PC-9 (cell line): ENCODE measurements at regions of chr1 and their contacts with region 1.

Region 1: DNA sequence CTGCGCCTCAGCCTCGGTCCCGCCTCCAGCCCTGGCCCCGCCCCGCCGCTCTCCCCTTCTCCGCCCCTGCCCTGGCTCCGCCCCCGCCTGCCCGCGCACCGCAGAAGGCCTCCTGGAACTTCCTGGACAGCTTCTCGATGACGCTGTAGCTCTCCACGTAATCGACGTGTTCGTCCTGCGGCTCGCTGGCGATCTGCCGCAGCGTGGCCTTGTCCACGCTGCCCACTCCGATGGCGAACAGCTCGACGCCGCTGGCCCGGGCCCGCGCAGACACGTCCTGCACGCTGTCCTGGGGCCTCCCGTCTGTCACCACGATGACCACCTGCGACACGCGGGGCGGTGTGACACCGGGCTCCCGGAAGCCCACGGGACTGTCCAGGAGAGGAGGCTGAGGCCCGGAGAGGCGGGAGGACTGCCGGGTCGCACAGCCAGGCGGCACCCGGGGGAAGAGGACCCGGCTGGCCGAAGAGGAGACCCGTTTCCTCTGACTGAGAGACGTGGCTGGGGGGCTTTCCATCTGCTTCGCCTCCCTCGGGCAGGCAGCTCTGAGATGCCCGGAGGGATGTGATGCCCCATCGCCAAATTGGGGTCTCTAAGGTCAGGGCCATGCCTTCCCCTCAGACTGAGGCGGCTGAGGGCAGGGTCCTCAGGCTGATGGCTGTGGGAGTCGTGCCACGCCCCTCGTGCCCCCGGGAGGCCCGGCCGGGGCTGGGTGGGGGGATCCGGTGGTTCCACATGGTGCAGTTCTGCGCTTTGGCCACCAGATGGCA is 4.6 kb downstream of the MATN1 start:
- DNase-seq: peak; percentile 79 to 96
- H3K4me3 ChIP-seq: peak overlapping the region; percentile 77
- H3K27ac ChIP-seq: peak overlapping the region; percentile 83
- H3K4me1 ChIP-seq: 0 out of 2 replicates have a peak, but pooled peaks cover 5% of the 10 kb centered on the region
- H3K27me3 ChIP-seq: no peaks in the 10 kb centered on the region
- CTCF ChIP-seq: peak; percentile 95

Region 2: GRCh38 chr1:30473922-30474817 is 244.7 kb before region 1 on chr1:
- CTCF ChIA-PET with region 1: no interaction called
- POLR2A ChIA-PET with region 1: no interaction called
- intact Hi-C with region 1: no loop called
- DNase-seq: no peak
- H3K4me3 ChIP-seq: no peak overlapping the region
- H3K27ac ChIP-seq: no peak overlapping the region
- H3K4me1 ChIP-seq: no peaks in the 10 kb centered on the region
- H3K27me3 ChIP-seq: no peaks in the 10 kb centered on the region
- CTCF ChIP-seq: no peak

Region 3: GRCh38 chr1:30743584-30744059 is 24.8 kb after region 1 on chr1:
- CTCF ChIA-PET with region 1: no interaction called
- POLR2A ChIA-PET with region 1: interaction called, 12 read pairs
- intact Hi-C with region 1: no loop called
- DNase-seq: no peak
- H3K4me3 ChIP-seq: no peak overlapping the region
- H3K27ac ChIP-seq: no peak overlapping the region
- H3K4me1 ChIP-seq: peaks cover 20% of the 10 kb centered on the region
- H3K27me3 ChIP-seq: no peaks in the 10 kb centered on the region
- CTCF ChIP-seq: no peak

Region 4: GRCh38 chr1:30756545-30757195 is 37.8 kb after region 1 on chr1:
- CTCF ChIA-PET with region 1: interaction called, 5 read pairs
- POLR2A ChIA-PET with region 1: interaction called, 4 read pairs
- intact Hi-C with region 1: loop called (anchors 2 kb)
- DNase-seq: peak; percentile 84 to 93
- H3K4me3 ChIP-seq: peak overlapping the region; percentile 40; the same call in 1 of the 2 replicates
- H3K27ac ChIP-seq: peak overlapping the region; percentile 75
- H3K4me1 ChIP-seq: peaks cover 65% of the 10 kb centered on the region
- H3K27me3 ChIP-seq: no peaks in the 10 kb centered on the region
- CTCF ChIP-seq: no peak

Region 5: DNA sequence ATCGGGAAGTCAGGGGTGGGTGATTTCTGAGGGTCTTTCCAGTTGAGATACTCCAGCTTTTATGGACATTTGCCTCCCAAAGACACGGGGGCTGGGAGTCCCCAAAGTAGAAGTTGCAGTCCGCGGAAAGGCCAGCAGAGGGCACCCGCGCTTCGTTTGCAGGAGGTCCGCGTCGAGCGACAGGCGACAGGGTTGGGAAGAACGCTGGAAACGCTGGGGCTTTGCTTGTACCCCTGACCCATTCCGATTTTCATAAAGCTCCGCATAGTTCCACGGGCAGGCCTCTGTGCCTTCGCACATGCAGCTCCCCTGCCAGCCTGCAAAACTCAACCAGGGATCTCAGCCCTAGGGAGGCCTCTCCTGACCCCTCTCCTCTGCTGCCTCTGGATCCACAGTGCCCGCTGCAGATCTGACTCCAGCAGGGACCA is 83.0 kb after region 1 on chr1:
- CTCF ChIA-PET with region 1: interaction called, 4 read pairs
- POLR2A ChIA-PET with region 1: no interaction called
- intact Hi-C with region 1: loop called (anchors 5 kb)
- DNase-seq: peak in 1 of 2 experiments; percentile 79
- H3K4me3 ChIP-seq: no peak overlapping the region
- H3K27ac ChIP-seq: no peak overlapping the region
- H3K4me1 ChIP-seq: peaks cover 25% of the 10 kb centered on the region
- H3K27me3 ChIP-seq: peaks cover 6% of the 10 kb centered on the region; the same call in 1 of the 2 replicates
- CTCF ChIP-seq: peak; percentile 88

Region 6: DNA sequence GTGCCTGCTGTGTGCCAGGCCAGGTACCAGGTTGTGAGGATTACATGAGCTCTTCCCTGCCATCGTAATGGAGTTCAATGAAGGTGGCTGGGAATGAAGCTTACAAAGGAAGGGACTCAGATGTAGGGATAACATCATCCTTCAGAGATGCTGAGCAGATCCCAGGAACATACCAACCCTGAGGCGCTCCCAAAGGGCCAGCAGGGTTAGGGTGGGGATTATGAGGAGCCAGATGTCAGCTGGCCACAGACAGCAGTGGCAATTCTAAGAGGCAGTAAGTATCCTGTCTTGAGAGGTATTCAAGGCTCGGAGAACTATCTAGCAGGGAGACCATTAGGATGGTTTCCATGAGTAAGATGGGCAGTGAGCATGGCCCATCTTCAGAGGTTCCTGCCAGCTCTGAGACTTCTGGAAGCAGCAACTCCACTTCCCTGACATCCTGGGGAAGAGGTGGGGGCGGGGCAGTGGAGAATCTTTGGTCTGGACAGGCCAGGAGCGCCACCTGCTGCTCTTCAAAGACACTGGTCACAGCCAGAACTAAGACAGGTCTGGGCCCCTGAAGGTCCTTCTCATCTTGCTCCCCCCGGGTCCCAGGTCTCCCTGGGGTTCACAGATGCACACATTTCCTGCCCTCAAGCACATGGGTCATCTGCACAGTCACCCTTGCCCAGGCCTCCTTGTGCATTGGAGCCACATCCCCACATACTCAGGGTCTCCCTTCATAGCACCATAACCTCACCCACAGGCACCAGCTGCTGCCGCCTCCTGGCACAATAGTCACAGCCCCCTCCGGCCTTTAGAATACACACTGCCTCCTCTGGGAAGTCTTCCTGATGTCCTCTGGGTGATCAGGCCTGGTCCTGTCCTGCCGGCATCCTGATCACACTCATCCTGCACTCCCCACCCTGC is 192.5 kb after region 1 on chr1:
- CTCF ChIA-PET with region 1: interaction called, 10 read pairs
- POLR2A ChIA-PET with region 1: interaction called, 7 read pairs
- intact Hi-C with region 1: loop called (anchors 1 kb)
- DNase-seq: peak; percentile 41 to 74
- H3K4me3 ChIP-seq: no peak overlapping the region
- H3K27ac ChIP-seq: no peak overlapping the region
- H3K4me1 ChIP-seq: peaks cover 17% of the 10 kb centered on the region
- H3K27me3 ChIP-seq: no peaks in the 10 kb centered on the region
- CTCF ChIP-seq: peak; percentile 82

Region 7: DNA sequence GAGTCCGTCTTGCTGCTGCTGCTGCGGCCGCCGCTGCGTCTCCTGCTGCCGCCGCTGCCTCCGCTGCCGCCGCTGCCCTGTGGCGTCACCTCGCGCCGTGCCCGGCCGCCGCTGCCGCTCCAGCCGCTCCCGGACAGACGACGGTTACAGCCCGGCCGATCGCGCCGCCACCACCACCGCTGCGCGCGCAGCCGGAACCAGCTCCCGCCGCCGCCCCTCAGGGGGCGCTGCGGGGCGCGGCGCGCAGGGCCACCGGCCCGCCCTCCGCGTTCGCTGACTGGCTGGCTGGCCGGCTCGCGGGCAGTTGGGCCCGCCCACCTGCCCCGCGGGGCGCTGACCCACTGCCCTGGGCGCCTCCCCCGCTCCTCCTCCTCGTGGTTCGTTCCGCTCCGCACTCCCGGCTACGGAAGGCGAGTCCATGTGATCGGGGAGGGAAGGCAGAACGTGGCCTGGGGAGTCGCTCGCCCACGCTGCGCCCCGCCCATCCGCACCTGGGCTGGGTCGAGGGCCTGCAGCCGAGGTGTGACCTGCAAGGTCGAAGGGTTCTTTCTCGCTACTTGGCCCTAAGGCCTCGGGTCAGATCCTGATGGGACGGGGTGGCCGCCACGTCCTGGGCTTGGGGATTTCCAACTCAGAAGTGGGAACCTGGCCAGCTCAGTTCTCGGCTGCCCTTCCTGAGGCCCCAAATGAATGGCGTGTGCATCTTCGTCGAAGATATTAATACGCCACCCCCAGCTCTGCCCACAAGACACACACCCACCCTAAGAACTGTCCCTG is 1219.5 kb after region 1 on chr1 and contains the start of gene PTP4A2:
- CTCF ChIA-PET with region 1: no interaction called
- POLR2A ChIA-PET with region 1: interaction called, 14 read pairs
- intact Hi-C with region 1: no loop called
- DNase-seq: peak; percentile 96 to 97
- H3K4me3 ChIP-seq: peak within 1 kb of the TSS; percentile 86
- H3K27ac ChIP-seq: peak within 1 kb of the TSS; percentile 95
- H3K4me1 ChIP-seq: peaks cover 78% of the 10 kb centered on the region
- H3K27me3 ChIP-seq: no peaks in the 10 kb centered on the region
- CTCF ChIP-seq: no peak; the same call in 1 of the 2 replicates
- total RNA-seq, gene PTP4A2: 149 and 201 TPM in 2 replicates